Posterior cingulate gyrus (tissue), 11 donors: ENCODE measurements at regions of chr10 and their contacts with region 1.

Region 1: GRCh38 chr10:75099952-75100763 is 11.3 kb upstream of the SAMD8 start:
- DNase-seq: peak; percentile 69 to 97 (median 86)

Region 2: DNA sequence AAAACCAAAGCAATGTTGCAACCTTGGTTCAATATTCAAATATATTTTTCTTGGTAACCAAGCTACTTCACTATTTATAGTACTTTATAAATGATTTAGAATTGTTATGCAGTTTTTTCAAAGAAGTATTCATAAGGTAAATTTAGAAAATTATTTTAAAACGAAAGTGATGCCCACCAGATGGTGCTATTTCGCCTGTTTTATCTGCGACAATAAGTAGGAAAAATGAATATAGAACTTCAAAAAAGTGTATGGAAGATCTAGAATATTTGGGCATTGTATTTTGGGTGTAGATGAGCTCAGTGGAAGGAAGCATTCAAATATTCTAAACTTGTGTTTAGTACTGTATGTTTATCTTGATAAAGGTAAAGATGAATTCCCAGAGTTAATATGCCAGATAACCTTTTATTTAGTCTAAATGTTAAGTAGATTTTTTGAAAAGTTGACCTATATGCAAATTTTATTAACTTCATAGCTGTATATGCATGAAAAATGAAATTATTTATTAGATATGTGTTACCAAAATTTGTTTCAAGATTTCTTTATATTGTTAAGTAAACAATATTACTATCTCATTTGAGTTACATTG is 856.0 kb before region 1 on chr10:
- intact Hi-C with region 1: loop called (anchors 1 kb)
- DNase-seq: no peak

Region 3: DNA sequence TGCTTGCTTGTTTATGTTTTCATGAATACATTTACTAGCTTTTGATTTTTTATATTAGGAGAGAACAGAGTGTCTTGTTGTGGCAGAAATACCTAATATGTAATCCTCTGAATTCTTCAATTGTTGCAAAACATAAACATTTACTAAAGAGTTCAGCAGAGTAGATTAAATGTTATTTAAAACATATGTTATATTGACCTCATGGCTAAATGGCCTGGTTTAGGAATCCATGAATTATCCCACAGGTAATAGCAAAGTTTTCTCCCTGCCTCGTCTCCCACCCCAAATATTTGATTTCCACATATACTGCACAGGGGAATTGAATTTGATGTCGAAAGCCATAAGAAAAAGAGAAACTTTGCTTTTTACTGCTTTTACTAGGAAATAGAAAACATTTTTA is 837.3 kb before region 1 on chr10:
- intact Hi-C with region 1: loop called (anchors 1 kb)
- DNase-seq: no peak

Region 4: DNA sequence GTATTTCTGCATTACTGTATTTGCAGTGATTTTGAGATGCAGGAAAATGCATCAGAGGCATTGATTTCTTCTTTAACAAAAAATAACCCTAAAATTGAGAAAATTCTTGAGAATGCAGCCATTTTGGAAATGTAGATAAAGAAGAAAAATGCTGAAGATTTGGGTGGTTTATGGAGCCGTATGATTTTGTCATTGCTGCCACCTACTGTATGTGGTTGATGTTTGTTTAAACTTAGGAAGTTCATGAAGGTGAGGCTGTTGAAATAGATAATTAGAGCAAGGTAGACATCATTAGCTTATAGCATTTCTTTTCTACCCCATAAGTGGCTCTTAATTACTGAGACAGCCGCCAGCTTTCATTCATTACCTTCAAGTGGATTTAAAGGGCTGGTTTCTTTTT is 80.8 kb before region 1 on chr10:
- intact Hi-C with region 1: loop called (anchors 5 kb)
- DNase-seq: no peak

Region 5: DNA sequence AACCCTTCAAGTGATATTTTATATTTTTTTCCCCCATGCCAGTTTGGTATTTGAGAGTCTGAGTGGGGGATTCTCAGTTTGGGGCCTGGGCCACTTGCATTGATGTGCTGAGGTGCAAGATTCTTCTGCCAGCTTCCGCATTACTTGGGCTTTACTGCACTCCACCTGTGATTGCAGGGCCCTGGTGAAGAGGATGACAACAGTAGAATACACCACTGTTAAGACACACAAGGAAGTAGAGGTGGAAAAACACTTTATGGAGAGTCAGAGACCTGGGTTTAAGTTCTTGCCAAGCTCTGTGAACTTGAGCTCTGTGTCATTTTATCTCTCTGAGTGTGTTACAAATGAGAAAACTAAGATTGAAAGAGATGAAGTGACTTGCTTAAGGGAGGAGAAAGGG is 540.6 kb after region 1 on chr10:
- intact Hi-C with region 1: no loop called
- DNase-seq: no peak